AG04449 (cell line): ENCODE measurements at regions of chr12 and their contacts with region 1.

Region 1: DNA sequence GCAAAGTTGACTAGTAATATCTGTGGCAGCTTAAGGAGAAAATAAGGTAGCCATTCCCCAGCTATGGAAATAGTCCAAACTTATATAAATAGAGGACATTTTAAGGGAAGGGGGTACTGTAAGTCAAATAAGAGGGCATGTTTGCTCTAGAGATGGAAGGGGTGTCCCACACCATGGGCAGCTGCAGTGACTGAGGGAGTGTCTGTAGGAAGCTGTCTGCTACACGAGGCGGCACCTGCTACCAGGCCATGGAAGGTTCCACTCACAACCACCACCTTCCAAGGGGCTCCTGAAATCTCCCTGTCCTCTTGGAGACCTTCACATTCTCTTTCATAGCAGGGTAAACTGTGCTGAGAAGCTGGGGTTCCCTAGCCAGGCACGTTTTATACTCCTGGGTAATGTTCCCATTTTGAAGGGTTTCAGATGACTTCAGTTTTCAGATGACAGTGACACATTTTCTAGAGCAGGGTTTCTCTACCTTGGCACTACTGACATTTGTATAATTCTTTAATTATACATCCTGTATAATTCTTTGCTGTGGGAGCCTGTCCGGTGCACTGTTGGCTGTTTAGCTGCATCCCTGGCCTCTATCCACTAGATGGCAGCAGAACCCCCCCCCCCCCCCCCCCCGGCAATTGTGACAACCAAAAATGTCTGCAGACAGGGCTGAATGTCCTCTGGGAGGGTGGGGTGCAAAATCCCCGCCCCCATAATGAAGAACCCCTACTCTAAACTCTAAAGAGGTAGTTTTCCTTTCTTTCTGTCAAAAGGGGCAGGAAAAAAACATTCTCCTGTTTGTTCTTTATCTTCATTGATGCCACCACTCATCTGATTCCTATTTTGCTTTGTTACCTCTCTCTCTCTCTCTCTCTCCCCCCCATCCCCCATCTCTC is 11.6 kb upstream of the SMCO2 start:
- DNase-seq: no peak
- H3K4me3 ChIP-seq: no peak overlapping the region
- CTCF ChIP-seq: peak; percentile 23

Region 2: DNA sequence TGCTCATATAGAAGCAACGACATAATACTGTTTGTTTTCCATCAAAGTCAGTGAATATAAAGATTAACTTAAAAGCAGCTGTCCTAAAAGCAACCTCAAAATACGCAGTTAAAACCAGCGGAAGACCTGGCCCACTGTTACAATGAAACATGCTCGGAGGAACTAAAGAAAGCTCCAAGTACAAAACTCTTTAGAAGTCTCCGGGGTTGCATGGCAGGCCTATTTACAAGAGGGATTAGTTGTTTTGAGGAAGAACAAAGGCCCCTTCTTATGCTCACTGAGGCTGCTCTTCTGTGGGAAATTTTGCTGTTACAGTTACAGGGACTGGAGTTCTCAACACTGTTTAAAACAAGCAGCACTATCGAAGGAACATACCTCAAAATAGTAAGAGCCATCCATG is 276.6 kb before region 1 on chr12:
- CTCF ChIA-PET with region 1: no interaction called
- POLR2A ChIA-PET with region 1: no interaction called
- DNase-seq: no peak
- H3K4me3 ChIP-seq: no peak overlapping the region
- CTCF ChIP-seq: no peak

Region 3: GRCh38 chr12:27396216-27396815 is 38.6 kb before region 1 on chr12:
- CTCF ChIA-PET with region 1: no interaction called
- POLR2A ChIA-PET with region 1: no interaction called
- DNase-seq: no peak
- H3K4me3 ChIP-seq: no peak overlapping the region
- CTCF ChIP-seq: no peak

Region 4: GRCh38 chr12:27424631-27425230 is 10.2 kb before region 1 on chr12:
- CTCF ChIA-PET with region 1: interaction called, 61 read pairs
- POLR2A ChIA-PET with region 1: no interaction called
- DNase-seq: peak; percentile 31
- H3K4me3 ChIP-seq: no peak overlapping the region
- CTCF ChIP-seq: peak; percentile 53

Region 5: DNA sequence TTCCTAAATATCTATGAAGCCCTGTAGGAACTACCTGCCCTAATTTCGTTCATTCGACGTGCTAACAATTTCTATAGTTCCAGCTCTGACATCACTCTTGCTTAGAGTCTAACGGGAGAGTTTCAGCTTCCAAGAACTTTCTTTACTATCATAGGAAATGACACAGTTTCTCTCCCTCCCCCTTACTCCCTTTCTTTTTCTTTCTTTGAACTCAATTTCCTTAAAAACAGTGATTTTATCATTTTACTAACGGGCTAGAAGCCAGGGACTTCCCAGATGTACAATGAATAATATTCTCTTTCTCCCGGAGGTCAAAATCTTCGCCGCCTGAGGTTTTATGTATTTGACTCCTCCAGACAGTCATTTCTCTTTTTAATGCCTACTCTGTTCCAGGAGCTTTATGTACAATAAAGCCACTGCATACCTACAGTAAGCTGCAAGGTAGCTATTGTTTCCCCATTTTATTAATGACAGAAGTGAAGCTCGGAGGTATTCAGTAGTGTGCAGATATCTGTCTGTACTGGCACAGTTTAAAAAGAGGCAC is 27.3 kb after region 1 on chr12:
- CTCF ChIA-PET with region 1: interaction called, 72 read pairs
- POLR2A ChIA-PET with region 1: no interaction called
- DNase-seq: no peak
- H3K4me3 ChIP-seq: no peak overlapping the region
- CTCF ChIP-seq: no peak

Region 6: DNA sequence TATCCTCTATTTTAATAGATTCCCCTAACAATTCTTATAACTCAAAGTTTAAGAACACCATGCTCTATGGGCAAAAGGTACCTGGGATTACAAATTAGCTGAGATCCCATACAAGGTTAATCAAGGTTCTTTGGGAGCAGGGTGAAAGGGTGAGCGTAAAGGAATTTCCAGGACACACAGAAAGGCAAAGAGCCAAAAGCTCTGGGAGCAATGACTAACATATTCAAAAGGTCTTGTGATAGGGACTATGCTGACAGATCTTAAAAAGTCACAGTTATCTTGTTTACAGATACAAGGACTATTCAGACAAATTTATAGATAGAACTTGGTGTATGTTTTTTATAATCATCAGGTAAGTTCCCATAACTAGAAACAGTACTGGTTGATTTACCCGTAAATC is 69.6 kb after region 1 on chr12:
- CTCF ChIA-PET with region 1: interaction called, 14 read pairs
- POLR2A ChIA-PET with region 1: no interaction called
- DNase-seq: no peak
- H3K4me3 ChIP-seq: no peak overlapping the region
- CTCF ChIP-seq: no peak

Region 7: GRCh38 chr12:27539191-27539631 is 104.3 kb after region 1 on chr12:
- CTCF ChIA-PET with region 1: interaction called, 10 read pairs
- POLR2A ChIA-PET with region 1: no interaction called
- DNase-seq: no peak
- H3K4me3 ChIP-seq: no peak overlapping the region
- CTCF ChIP-seq: no peak

Region 8: DNA sequence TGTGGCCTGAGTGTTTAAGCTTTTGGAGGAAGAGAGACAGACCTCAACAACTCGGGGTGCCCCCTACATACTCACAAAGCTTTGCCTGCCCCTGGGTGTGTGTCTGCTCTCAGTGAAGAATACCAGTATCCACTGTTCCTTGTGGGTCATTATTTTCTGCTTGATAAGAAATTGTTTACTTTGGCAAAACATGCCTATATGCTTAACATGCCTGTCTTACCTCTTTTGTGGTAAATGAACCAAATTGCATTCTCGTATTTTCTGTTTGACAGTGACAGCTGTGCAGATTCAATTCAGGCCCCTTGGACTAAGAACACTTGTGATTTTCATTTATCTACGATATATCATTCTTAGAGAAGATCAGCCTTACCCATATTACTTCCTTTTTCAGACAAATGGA is 210.8 kb after region 1 on chr12:
- CTCF ChIA-PET with region 1: interaction called, 59 read pairs
- POLR2A ChIA-PET with region 1: no interaction called
- DNase-seq: no peak
- H3K4me3 ChIP-seq: no peak overlapping the region
- CTCF ChIP-seq: no peak